B cell (primary cell): ENCODE measurements at regions of chr15 and their contacts with region 1.

Region 1: GRCh38 chr15:37548116-37548515 is 386.3 kb upstream of the TMCO5A start:
- DNase-seq: no peak
- ATAC-seq: no peak
- H3K4me3 ChIP-seq: no peak overlapping the region
- H3K4me3 Mint-ChIP-seq: no peak overlapping the region
- H3K27ac ChIP-seq: no peak overlapping the region
- H3K27ac Mint-ChIP-seq: no peak overlapping the region
- H3K4me1 ChIP-seq: no peaks in the 10 kb centered on the region
- H3K4me1 Mint-ChIP-seq: no peaks in the 10 kb centered on the region
- H3K27me3 ChIP-seq: no peaks in the 10 kb centered on the region
- H3K27me3 Mint-ChIP-seq: no peaks in the 10 kb centered on the region
- CTCF ChIP-seq: no peak

Region 2: GRCh38 chr15:37181339-37181738 is 366.8 kb before region 1 on chr15:
- CTCF ChIA-PET with region 1: no interaction called
- POLR2A ChIA-PET with region 1: no interaction called
- intact Hi-C with region 1: no loop called
- DNase-seq: no peak
- ATAC-seq: no peak
- H3K4me3 ChIP-seq: no peak overlapping the region
- H3K4me3 Mint-ChIP-seq: no peak overlapping the region
- H3K27ac ChIP-seq: no peak overlapping the region
- H3K27ac Mint-ChIP-seq: no peak overlapping the region
- H3K4me1 ChIP-seq: no peaks in the 10 kb centered on the region
- H3K4me1 Mint-ChIP-seq: no peaks in the 10 kb centered on the region
- H3K27me3 ChIP-seq: no peaks in the 10 kb centered on the region
- H3K27me3 Mint-ChIP-seq: no peaks in the 10 kb centered on the region
- CTCF ChIP-seq: no peak

Region 3: DNA sequence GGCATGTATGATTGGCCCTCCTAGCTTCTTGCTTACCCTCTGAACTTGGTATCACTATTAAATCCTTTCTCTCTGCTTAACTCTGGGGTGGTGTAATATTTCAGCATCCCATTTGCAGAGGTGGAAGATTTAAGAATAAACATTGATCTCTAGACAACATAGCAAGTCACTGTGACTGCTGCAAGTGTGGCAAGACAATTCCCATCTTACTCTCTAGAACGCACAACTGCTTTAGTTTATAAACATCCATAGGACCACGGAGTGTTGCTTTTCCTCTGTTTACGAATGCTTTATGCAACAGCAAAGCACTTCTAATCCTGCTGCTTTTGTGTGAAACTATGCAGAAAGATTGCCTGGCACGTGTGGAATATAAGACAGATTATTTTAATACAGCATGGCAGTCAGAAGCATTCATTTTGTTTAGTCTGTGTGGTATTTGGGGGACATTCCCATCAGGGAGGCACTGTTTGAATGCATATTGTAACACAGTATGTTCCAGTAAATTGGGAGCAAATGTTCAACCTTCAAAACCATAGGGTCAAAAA is 47.4 kb after region 1 on chr15:
- CTCF ChIA-PET with region 1: no interaction called
- POLR2A ChIA-PET with region 1: no interaction called
- intact Hi-C with region 1: loop called (anchors 10 kb)
- DNase-seq: no peak
- ATAC-seq: no peak
- H3K4me3 ChIP-seq: no peak overlapping the region
- H3K4me3 Mint-ChIP-seq: no peak overlapping the region
- H3K27ac ChIP-seq: no peak overlapping the region
- H3K27ac Mint-ChIP-seq: no peak overlapping the region
- H3K4me1 ChIP-seq: no peaks in the 10 kb centered on the region
- H3K4me1 Mint-ChIP-seq: no peaks in the 10 kb centered on the region
- H3K27me3 ChIP-seq: no peaks in the 10 kb centered on the region
- H3K27me3 Mint-ChIP-seq: no peaks in the 10 kb centered on the region
- CTCF ChIP-seq: no peak